GM23248 (cell line): ENCODE measurements at regions of chr9 and their contacts with region 1.

Region 1: DNA sequence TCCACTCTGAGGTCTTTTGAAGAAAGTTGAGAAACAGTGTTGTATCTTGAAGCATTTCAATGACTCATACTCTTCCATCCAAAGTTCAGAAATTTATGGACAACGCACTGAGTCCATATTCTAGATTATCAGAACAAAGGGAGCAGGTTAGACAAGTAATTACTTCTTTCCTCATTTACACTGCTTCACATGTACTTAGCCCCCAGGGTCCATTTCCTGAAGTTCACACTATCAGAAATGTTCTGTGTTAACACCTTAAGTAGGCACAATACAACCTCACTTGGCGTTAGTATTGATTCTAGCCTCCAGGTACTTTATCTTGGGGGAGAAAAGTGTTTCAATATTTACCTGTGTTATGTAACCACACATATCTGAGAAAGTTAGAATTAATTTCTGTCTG is 487.9 kb upstream of the DMAC1 start:
- DNase-seq: no peak
- H3K4me3 ChIP-seq: no peak overlapping the region
- H3K27ac ChIP-seq: no peak overlapping the region
- H3K4me1 ChIP-seq: no peaks in the 10 kb centered on the region
- H3K27me3 ChIP-seq: no peaks in the 10 kb centered on the region

Region 2: DNA sequence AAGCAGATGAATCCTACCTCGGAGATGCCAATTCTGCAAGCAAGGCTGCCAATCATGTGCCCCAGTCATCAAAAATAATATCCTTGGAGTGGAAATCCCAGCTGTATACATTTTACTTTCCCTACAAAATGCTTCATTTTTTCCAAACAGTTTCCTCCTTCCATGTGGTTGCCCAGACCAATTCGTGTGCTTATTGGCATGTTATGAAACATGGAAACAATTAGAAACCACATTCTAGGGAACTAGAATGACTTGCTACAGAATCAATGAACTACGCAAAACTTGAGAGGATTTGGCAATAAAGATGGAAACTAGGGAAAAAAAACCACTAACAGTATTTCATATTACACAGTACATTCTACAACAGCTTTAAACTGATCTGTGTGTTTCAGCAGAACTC is 96.6 kb after region 1 on chr9:
- in situ Hi-C with region 1: loop called (anchors 25 kb)
- DNase-seq: no peak
- H3K4me3 ChIP-seq: no peak overlapping the region
- H3K27ac ChIP-seq: no peak overlapping the region
- H3K4me1 ChIP-seq: no peaks in the 10 kb centered on the region
- H3K27me3 ChIP-seq: no peaks in the 10 kb centered on the region